ENCODE measurements at regions of chr14 and their contacts with region 1.

Region 1: GRCh38 chr14:104326848-104327247 is 188.5 kb downstream of the KIF26A start:
- DNase-seq: peak in 1 of 10 donors; percentile 13
- H3K4me3 ChIP-seq: no peak overlapping the region
- H3K27ac ChIP-seq: no peak overlapping the region
- H3K27me3 ChIP-seq: peaks cover 0 to 17% (median 2%) of the 10 kb centered on the region in 45 donors
- CTCF ChIP-seq: no peak

Region 2: DNA sequence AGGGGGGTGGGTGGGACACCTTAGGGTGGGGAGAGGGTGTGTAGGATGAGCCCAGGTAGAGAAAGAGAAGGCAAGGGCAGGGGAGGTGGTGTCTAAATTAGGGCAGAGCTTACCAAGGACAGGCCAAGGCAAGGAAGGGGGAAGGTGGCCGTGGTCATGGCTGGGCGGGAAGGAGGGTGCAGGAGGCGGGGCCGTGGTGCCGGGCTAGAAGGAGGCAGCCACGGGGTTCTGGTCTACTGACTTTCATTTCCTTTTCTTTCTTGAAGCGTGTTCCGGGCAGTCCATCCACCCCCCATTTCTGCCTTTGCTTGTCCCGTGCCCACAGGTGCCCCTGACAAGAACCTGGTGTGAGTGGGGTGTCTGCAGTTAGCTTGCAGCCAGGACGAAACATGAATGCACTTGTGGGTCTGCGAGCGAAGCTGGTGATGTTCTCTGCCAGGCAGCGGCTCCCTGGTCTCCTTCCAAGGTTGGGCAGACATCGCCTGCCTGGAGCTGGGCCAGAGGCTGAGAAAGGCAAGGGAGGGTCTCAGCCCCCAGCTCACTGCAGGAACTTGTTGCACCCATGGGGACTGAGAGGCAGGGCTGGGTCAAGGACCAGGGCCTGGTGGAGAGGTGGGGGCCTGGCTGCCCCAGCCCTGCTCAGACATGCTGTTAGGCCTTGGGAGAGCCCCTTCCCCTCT is 130.2 kb before region 1 on chr14:
- intact Hi-C with region 1: no loop called
- DNase-seq: no peak
- H3K4me3 ChIP-seq: peak overlapping the region in 2 of 59 donors; percentile 4 to 38
- H3K27ac ChIP-seq: no peak overlapping the region
- H3K27me3 ChIP-seq: peaks cover 0 to 60% (median 7%) of the 10 kb centered on the region in 45 donors
- CTCF ChIP-seq: no peak

Region 3: DNA sequence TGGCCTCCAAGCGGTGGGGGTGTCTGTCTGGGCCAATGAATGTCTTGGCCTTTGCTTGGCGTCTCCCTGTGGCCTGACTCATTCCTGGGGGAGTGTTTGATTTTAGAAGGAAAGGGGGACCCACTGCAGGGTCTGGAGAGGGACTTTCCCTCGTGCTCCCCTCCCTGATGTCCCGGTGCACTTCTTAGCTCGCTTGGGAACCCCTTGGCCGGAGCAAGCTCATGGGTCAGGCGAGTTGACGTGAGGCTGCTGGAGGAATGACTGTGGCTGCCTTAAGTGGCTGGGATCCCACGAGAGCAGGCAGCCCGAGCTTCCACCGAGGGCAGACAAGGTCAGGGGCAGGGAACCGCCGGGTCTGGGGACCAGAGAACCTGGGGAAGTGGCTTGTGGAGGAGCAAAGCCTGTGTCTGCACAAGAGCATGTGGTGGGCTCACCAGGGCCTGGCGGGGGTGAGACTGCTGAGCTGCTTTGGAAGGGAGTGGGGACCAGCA is 34.3 kb after region 1 on chr14:
- intact Hi-C with region 1: loop called in 1 of 2 experiments (anchors 5 kb)
- DNase-seq: peak in 6 of 10 donors; percentile 1 to 31 (median 27)
- H3K4me3 ChIP-seq: no peak overlapping the region
- H3K27ac ChIP-seq: no peak overlapping the region
- H3K27me3 ChIP-seq: peaks cover 0 to 10% (median 0%) of the 10 kb centered on the region in 45 donors
- CTCF ChIP-seq: no peak